HepG2 (cell line): ENCODE measurements at regions of chr17 and their contacts with region 1.

Region 1: GRCh38 chr17:75087558-75088453 is at the start of gene SLC16A5:
- DNase-seq: peak; percentile 91
- ATAC-seq: peak; percentile 63
- H3K4me3 ChIP-seq: peak within 1 kb of the TSS; percentile 57 to 76 (median 68)
- H3K27ac ChIP-seq: peak within 1 kb of the TSS; percentile 63
- H3K4me1 ChIP-seq: peaks cover 97% of the 10 kb centered on the region
- H3K27me3 ChIP-seq: 0 out of 5 replicates have a peak, but pooled peaks cover 0 to 11% of the 10 kb centered on the region in 2 experiments
- CTCF ChIP-seq: no peak
- EP300 ChIP-seq: peak in 1 of 2 experiments; percentile 19; a peak in 1 of 4 replicates
- POLR2A ChIP-seq: no peak; a peak in 1 of 4 replicates
- RAD21 ChIP-seq: peak; percentile 22
- total RNA-seq, gene SLC16A5: 0.42 and 0.69 TPM in 2 replicates

Region 2: GRCh38 chr17:74935585-74936469 is 152.0 kb before region 1 on chr17 and contains the start of gene OTOP3:
- CTCF ChIA-PET with region 1: no interaction called
- POLR2A ChIA-PET with region 1: no interaction called
- in situ Hi-C with region 1: no loop called
- intact Hi-C with region 1: no loop called
- DNase-seq: no peak
- ATAC-seq: peak; percentile 48
- H3K4me3 ChIP-seq: peak within 1 kb of the TSS in 1 of 3 experiments; percentile 7; a peak in 1 of 6 replicates
- H3K27ac ChIP-seq: no peak within 1 kb of the TSS
- H3K4me1 ChIP-seq: no peaks in the 10 kb centered on the region
- H3K27me3 ChIP-seq: peaks cover 18 to 91% of the 10 kb centered on the region in 2 experiments
- CTCF ChIP-seq: no peak
- EP300 ChIP-seq: no peak
- POLR2A ChIP-seq: no peak
- RAD21 ChIP-seq: no peak
- total RNA-seq, gene OTOP3: not detected in 2 replicates

Region 3: DNA sequence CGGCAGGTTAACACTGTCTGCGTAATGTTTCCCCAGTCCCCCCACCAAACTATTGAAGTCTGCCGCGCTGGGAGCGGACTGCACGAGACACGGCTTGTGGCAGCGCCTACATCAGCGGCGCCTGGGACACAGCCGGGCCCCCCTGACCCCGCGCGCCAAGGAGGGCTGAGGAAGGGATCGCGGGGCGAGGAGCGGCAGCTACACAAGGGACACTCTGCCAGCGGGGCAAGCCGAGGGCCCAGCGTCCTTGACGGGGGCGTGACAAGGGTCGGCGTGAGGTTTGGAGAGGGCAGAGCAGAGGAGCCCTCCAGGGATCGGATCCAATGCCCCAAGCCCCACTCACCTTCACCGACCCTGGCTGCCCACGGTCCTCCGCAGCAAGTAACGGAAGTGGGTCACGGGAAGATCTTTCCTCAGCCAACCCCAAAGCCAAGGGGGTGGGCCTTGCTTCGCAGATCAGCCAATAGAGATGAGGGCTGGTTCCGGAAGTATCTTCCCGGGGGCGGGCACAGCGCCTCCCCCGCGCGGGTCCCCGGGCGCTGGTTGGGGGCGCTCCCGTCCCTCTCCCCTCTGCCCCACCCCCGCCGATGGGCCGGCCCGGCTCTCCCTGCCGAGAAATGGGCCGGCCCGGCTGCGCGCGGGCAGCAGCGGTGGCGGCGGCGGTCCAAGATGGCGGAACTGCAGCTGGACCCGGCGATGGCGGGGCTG is 41.1 kb before region 1 on chr17 and contains the starts of genes ATP5PD and KCTD2:
- CTCF ChIA-PET with region 1: no interaction called
- POLR2A ChIA-PET with region 1: interaction called, 12 read pairs
- in situ Hi-C with region 1: no loop called
- intact Hi-C with region 1: loop called (anchors 5 kb)
- DNase-seq: peak; percentile 97
- ATAC-seq: peak; percentile 98
- H3K4me3 ChIP-seq: peak within 1 kb of the TSS; percentile 75 to 98 (median 90)
- H3K27ac ChIP-seq: peak within 1 kb of the TSS; percentile 92
- H3K4me1 ChIP-seq: peaks cover 29% of the 10 kb centered on the region
- H3K27me3 ChIP-seq: no peaks in the 10 kb centered on the region; a peak in 1 of 5 replicates
- CTCF ChIP-seq: peak; percentile 40
- EP300 ChIP-seq: peak in 1 of 2 experiments; percentile 56; a peak in 1 of 4 replicates
- POLR2A ChIP-seq: peak; percentile 98 to 99
- RAD21 ChIP-seq: peak; percentile 18
- total RNA-seq, gene ATP5PD: 428 and 565 TPM in 2 replicates
- total RNA-seq, gene KCTD2: 27.5 and 28.3 TPM in 2 replicates

Region 4: GRCh38 chr17:75069783-75070182 is 18.0 kb before region 1 on chr17:
- CTCF ChIA-PET with region 1: no interaction called
- POLR2A ChIA-PET with region 1: interaction called, 18 read pairs
- in situ Hi-C with region 1: no loop called
- intact Hi-C with region 1: no loop called
- DNase-seq: no peak
- ATAC-seq: peak; percentile 22; the same call in 1 of the 3 replicates
- H3K4me3 ChIP-seq: no peak overlapping the region
- H3K27ac ChIP-seq: no peak overlapping the region
- H3K4me1 ChIP-seq: peaks cover 36% of the 10 kb centered on the region
- H3K27me3 ChIP-seq: peaks cover 0 to 14% of the 10 kb centered on the region in 2 experiments; a peak in 3 of 5 replicates
- CTCF ChIP-seq: peak; percentile 54
- EP300 ChIP-seq: no peak
- POLR2A ChIP-seq: no peak
- RAD21 ChIP-seq: peak; percentile 52; the same call in 1 of the 2 replicates

Region 5: DNA sequence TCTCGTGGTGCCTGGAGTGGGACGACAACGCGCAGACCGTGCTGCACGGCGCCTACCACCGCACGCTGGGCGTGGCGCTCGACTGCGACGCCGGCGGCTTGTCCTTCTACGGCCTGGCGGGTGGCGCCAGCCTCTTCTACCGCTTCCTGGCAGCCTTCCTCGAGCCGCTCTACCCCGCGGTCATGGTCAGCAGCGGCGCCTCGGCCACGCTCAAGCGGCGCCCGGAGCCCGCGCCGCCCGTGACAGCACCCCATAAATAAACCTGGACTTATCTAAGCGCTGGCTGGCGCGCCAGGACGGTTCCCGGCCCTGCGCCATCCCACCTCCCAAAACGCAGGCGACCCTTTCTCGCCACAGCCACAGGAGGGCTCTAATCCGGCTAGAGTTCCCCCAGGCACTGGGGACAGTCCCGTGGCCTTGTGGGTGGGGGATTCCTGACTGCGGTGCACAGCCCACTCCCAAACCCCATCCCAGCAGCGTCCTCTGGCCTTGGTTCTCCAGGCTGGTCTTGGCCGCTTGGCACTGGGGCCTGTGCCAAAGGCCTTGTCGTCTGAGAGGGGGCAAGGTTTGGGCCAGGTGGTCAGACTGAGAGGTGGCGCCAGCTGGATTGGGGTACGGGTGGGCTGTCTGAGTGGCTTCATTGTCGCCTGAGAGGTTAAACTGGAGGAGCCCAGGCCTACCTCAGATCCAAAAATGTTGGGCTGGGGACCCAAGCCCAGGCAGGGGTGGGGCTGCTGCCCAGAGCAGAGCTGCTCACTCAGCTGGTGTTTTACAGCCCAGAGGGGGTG is 10.1 kb before region 1 on chr17:
- CTCF ChIA-PET with region 1: no interaction called
- POLR2A ChIA-PET with region 1: interaction called, 19 read pairs
- in situ Hi-C with region 1: no loop called
- intact Hi-C with region 1: no loop called
- DNase-seq: no peak
- ATAC-seq: no peak; the same call in 2 of the 3 replicates
- H3K4me3 ChIP-seq: peak overlapping the region; percentile 32 to 66 (median 46); a peak in 5 of 6 replicates
- H3K27ac ChIP-seq: no peak overlapping the region
- H3K4me1 ChIP-seq: peaks cover 92% of the 10 kb centered on the region
- H3K27me3 ChIP-seq: peaks cover 0 to 37% of the 10 kb centered on the region in 2 experiments; a peak in 3 of 5 replicates
- CTCF ChIP-seq: peak; percentile 28; the same call in 1 of the 2 replicates
- EP300 ChIP-seq: no peak
- POLR2A ChIP-seq: no peak
- RAD21 ChIP-seq: no peak

Region 6: GRCh38 chr17:75147878-75148546 is 60.2 kb after region 1 on chr17:
- CTCF ChIA-PET with region 1: no interaction called
- POLR2A ChIA-PET with region 1: no interaction called
- in situ Hi-C with region 1: no loop called
- intact Hi-C with region 1: no loop called
- DNase-seq: no peak
- ATAC-seq: no peak
- H3K4me3 ChIP-seq: no peak overlapping the region
- H3K27ac ChIP-seq: no peak overlapping the region
- H3K4me1 ChIP-seq: peaks cover 44% of the 10 kb centered on the region
- H3K27me3 ChIP-seq: no peaks in the 10 kb centered on the region
- CTCF ChIP-seq: no peak
- EP300 ChIP-seq: no peak
- POLR2A ChIP-seq: no peak
- RAD21 ChIP-seq: no peak